Heart left ventricle (tissue), 16 donors: ENCODE measurements at regions of chr19 and their contacts with region 1.

Region 1: DNA sequence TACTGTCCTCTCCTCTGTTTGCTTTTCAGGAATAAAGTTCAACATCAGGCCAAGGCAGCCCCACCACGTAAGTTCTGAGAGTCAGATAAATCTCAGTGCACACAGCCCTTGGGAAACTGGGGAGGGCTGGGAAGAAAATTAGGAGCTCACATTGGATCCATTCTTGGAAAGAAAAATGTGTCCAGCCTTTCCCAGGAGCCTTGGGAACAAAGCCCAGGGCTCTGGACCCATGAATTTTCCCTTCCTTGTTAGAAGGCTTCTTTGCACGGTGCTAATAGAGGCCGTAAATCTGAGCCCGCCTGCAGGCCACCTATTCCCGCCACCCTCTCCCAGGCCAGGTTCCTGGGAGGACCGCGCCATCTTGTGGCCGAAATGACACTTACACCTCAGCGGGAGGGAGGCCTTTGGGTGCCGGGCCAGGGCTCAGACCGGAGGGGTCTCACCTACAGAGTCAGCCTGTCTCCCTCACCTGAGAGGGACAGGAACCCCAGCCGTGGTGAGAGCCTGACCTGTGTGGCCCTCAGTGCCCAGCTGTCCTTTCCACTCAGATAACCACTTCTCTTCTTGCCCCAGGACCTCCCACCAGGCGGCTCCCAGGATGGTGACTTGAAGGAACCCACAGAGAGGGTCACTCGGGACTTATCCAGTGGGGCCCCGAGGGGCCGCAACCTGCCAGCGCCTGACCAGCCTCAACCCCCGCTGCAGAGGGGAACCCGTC is 25.1 kb upstream of the KCTD15 start:
- DNase-seq: peak; percentile 53 to 86 (median 62)
- ATAC-seq: peak; percentile 41 to 84 (median 74)
- H3K4me3 ChIP-seq: no peak overlapping the region
- H3K27ac ChIP-seq: no peak overlapping the region
- H3K4me1 ChIP-seq: no peaks in the 10 kb centered on the region
- H3K27me3 ChIP-seq: peaks cover 0 to 34% (median 5%) of the 10 kb centered on the region in 9 donors
- CTCF ChIP-seq: peak; percentile 68 to 90 (median 84)
- POLR2A ChIP-seq: no peak

Region 2: DNA sequence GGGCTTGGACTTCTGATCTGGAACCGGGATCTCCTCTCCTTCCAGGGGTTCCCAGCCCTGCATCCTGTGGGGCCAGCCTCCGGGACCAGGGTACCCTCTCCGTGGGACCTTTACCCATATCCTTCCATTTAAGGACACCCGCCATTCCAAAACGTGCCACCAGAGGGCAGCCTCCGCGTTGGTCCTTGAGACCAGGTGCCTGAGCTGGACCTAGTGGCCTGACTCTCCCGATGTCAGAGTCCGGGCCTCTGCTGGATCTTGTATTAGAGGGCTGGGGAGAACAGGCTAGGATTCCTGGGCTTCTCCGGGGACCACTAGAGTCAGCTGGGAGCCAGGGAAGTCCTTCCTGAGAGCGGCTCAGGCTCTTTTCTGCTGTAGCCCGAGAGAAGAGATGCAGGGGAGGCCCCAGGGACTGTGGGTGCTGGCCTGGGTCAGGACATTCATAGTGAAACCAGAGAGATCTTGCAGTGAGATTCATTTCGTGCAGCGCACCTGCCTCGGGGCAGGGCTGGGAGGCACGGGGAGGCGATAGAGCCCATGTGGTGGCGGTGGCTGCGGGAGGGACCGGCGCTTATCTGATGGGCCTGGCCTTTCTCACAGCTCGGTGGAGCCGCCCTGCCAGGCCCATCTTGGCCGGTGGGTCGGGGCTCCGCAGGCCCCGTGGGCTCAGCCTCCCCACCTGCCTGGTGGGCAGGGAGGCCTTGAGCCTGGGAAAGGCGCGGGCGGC is 536.1 kb before region 1 on chr19:
- intact Hi-C with region 1: loop called in 9 of 10 experiments (anchors 5 to 10 kb)
- DNase-seq: peak; percentile 61 to 91 (median 77)
- ATAC-seq: peak in 3 of 4 donors; percentile 67 to 82 (median 71)
- H3K4me3 ChIP-seq: no peak overlapping the region
- H3K27ac ChIP-seq: no peak overlapping the region
- H3K4me1 ChIP-seq: peaks cover 0 to 3% (median 0%) of the 10 kb centered on the region in 12 donors
- H3K27me3 ChIP-seq: peaks cover 0 to 33% (median 6%) of the 10 kb centered on the region in 9 donors
- CTCF ChIP-seq: peak; percentile 82 to 94 (median 90)
- POLR2A ChIP-seq: no peak

Region 3: DNA sequence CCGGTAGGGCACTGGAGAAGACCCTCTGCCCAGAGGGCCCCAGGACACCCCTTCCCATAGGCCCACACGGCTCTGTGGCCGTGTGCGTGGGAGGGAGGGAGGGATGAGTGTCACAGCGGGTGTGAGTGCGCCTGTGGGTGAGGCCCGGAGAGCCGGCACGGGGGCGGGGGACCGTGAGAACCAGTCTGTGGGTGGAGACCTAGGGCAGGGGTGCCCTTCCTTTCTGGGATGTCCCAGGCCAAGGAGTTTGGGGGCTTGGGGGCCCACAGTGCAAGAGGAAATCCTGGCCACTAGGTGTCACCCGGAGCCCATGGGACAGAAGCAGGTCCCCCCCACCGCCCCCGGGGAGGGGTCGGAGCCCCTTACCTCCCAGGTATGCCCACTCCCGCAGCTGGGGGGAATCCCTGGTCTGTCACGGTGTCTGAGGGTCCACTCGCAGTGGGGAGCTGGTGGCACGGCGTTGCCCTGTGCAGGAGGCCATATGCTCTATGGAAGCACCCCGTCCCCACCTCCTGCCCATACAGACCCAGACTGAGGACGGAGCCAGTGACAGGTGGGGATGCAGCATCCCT is 529.9 kb before region 1 on chr19:
- intact Hi-C with region 1: loop called in 9 of 10 experiments (anchors 5 to 10 kb)
- DNase-seq: peak in 2 of 5 donors; percentile 27 to 69
- ATAC-seq: peak in 3 of 4 donors; percentile 51 to 67 (median 58)
- H3K4me3 ChIP-seq: no peak overlapping the region
- H3K27ac ChIP-seq: no peak overlapping the region
- H3K4me1 ChIP-seq: peaks cover 0 to 8% (median 2%) of the 10 kb centered on the region in 12 donors
- H3K27me3 ChIP-seq: peaks cover 0 to 17% (median 0%) of the 10 kb centered on the region in 9 donors
- CTCF ChIP-seq: peak; percentile 56 to 80 (median 72)
- POLR2A ChIP-seq: no peak

Region 4: GRCh38 chr19:33416307-33417215 is 355.0 kb before region 1 on chr19:
- intact Hi-C with region 1: loop called in 3 of 10 experiments (anchors 5 kb)
- DNase-seq: peak in 3 of 5 donors; percentile 54 to 72 (median 70)
- ATAC-seq: peak in 3 of 4 donors; percentile 41 to 59 (median 49)
- H3K4me3 ChIP-seq: peak overlapping the region in 2 of 12 donors; percentile 21 to 29
- H3K27ac ChIP-seq: no peak overlapping the region
- H3K4me1 ChIP-seq: peaks cover 0 to 9% (median 0%) of the 10 kb centered on the region in 12 donors
- H3K27me3 ChIP-seq: no peaks in the 10 kb centered on the region
- CTCF ChIP-seq: peak; percentile 43 to 69 (median 60)
- POLR2A ChIP-seq: no peak

Region 5: GRCh38 chr19:33430674-33431277 is 340.8 kb before region 1 on chr19:
- intact Hi-C with region 1: loop called (anchors 1 to 5 kb)
- DNase-seq: peak; percentile 54 to 82 (median 67)
- ATAC-seq: peak in 3 of 4 donors; percentile 73 to 84 (median 78)
- H3K4me3 ChIP-seq: no peak overlapping the region
- H3K27ac ChIP-seq: no peak overlapping the region
- H3K4me1 ChIP-seq: no peaks in the 10 kb centered on the region
- H3K27me3 ChIP-seq: no peaks in the 10 kb centered on the region
- CTCF ChIP-seq: peak; percentile 60 to 84 (median 74)
- POLR2A ChIP-seq: no peak

Region 6: DNA sequence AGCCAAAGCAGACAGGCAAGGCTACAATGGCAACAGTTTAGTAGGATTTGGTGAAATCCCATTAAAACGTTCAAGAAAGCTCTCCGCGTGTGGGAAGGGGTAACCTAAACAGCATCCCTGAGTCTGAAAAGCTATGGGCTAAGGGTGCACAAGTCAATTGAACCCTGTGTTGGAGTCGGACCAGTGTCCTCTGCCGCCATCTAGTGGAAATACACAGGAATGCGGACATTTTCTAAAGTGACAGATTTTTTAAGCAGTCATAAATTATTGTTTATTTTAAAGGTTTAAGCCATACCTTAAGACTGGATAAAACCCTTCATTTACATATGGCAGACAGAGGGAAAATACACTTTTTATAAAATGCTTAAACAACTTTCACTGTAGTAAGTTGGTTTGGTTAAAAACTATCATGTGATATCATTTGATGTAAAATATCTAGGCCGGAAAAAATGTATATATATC is 374.2 kb after region 1 on chr19:
- intact Hi-C with region 1: loop called in 5 of 10 experiments (anchors 2 to 5 kb)
- DNase-seq: peak in 2 of 5 donors; percentile 13 to 32
- ATAC-seq: peak in 1 of 4 donors; percentile 46
- H3K4me3 ChIP-seq: no peak overlapping the region
- H3K27ac ChIP-seq: no peak overlapping the region
- H3K4me1 ChIP-seq: no peaks in the 10 kb centered on the region
- H3K27me3 ChIP-seq: peaks cover 0 to 3% (median 0%) of the 10 kb centered on the region in 9 donors
- CTCF ChIP-seq: peak; percentile 58 to 87 (median 78)
- POLR2A ChIP-seq: no peak

Region 7: DNA sequence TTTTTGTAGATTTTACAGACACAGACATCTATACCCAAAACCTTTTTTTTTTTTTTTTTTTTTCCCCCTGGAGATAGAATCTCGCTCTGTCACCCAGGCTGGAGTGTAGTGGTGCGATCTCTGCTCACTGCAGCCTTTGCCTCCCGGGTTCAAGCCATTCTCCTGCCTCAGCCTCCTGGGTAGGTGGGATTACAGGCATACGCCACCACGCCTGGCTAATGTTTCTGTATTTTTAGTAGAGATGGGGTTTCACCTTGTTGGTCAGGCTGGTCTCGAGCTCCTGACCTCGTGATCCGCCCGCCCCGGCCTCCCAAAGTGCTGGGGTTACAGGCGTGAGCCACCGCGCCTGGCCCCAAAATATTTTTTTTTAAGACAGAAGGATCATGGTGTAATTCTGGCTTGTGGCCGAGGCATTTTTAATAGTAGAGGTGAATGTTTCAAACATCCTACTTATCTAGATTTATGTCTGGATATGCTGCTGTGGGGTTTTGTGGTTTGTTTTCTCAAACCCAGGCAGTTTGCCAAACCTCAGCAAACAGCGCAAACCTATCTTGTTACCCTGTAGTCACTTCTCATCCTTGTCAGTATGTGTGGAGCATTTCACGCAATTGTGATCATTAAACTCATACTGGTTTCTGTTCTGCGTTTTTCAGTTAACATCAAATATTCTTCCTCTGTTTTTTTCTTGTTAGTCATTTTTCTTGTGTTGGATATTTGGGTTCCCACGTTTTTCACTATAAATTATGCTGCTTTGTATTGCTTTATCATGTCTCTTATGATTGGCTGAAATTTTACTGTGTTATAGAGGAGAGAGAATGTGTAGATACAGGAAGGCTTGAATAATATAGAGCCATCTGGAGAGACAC is 446.6 kb after region 1 on chr19:
- intact Hi-C with region 1: no loop called
- DNase-seq: no peak
- ATAC-seq: no peak
- H3K4me3 ChIP-seq: no peak overlapping the region
- H3K27ac ChIP-seq: peak overlapping the region in 2 of 12 donors; percentile 14 to 38
- H3K4me1 ChIP-seq: peaks cover 0 to 23% (median 0%) of the 10 kb centered on the region in 12 donors
- H3K27me3 ChIP-seq: no peaks in the 10 kb centered on the region
- CTCF ChIP-seq: no peak
- POLR2A ChIP-seq: no peak